ENCODE measurements at regions of chr4 and their contacts with region 1.

Region 1: GRCh38 chr4:25312496-25313200 is at the start of gene ZCCHC4:
- DNase-seq: peak; percentile 84 to 93 (median 89)
- H3K4me3 ChIP-seq: peak within 1 kb of the TSS; percentile 49 to 93 (median 78)
- H3K27ac ChIP-seq: peak within 1 kb of the TSS in 44 of 59 donors; percentile 5 to 85 (median 61)
- H3K27me3 ChIP-seq: no peaks in the 10 kb centered on the region
- CTCF ChIP-seq: peak; percentile 96 to 100 (median 100)
- total RNA-seq, gene ZCCHC4: 5.8 to 15.6 (median 10.8) TPM

Region 2: DNA sequence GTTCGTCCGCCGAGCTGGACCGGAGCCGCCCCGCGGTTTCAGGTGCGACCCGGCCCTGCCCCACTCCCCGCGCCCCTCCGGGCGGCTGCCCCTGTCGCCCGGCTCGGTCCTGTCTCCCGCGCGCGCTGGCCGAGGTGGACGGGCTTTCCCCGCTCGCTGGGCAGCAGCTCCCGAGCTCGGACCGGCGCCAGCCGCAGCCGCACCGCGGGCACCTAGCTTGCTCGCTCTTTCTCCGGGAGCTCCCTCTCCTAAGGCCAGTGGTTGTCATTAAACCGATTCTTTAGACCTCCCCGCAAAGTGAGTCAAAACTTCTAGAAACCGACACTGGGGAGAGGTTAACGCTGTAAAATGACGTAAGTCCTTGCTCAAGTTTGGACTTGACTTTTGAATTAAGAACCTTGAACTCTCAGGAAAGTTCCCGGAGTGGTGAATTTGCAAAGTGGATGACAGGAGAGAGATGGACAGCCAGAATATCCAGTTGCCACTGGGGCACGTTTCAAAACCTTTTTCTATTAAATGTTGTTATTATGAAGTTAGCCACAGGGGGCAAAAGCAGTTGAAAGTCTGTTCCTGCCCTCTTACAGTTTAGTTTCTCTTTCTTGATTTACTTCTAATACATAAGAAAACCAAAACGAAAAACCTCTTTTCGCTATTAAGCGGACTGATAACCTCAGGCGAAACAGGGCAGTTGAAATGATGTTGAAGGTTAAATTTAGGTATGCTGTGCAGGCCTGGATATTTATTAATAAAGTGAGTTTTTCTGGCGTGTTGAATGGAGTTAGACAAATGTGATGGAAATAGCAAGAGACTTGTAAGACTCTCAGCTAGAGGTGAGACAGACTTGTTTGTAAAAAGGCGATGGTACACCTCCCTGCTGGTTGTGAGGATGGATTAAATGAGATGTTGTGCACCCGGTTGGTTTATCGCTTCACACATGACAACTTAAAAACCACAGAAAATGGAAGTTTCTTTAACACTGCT is 78.0 kb before region 1 on chr4:
- intact Hi-C with region 1: loop called (anchors 2 to 5 kb)
- DNase-seq: peak in 5 of 10 donors; percentile 10 to 67 (median 40)
- H3K4me3 ChIP-seq: peak overlapping the region; percentile 54 to 98 (median 92)
- H3K27ac ChIP-seq: peak overlapping the region; percentile 23 to 94 (median 86)
- H3K27me3 ChIP-seq: no peaks in the 10 kb centered on the region
- CTCF ChIP-seq: peak in 52 of 56 donors; percentile 16 to 64 (median 44)

Measured in dorsolateral prefrontal cortex (tissue), 120 donors.